ENCODE measurements at regions of chr4 and their contacts with region 1.

Region 1: GRCh38 chr4:96955226-96955625 is 1115.3 kb downstream of the PDHA2 start:
- DNase-seq: no peak
- H3K4me3 ChIP-seq: no peak overlapping the region
- H3K27ac ChIP-seq: no peak overlapping the region
- H3K4me1 ChIP-seq: no peaks in the 10 kb centered on the region
- H3K27me3 ChIP-seq: no peaks in the 10 kb centered on the region
- CTCF ChIP-seq: no peak
- POLR2A ChIP-seq: no peak

Region 2: DNA sequence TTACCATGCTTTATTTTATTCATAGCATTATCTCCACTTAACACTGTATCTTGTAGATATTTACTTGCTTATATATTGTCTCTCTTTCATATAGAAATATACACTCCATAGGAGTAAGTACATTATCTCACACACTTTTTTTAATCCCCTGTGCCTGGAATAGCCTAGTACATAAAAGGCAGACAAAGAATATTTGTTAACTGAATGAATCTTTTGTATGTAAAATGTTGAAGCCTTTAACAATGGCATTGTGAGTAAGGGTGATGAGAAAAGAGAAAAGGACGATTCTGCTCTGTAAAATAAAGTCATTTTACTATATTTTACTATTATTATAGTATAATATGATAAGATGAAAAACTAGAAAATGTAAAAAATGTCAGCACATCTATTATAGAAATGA is 1213.0 kb before region 1 on chr4:
- intact Hi-C with region 1: no loop called
- DNase-seq: no peak
- H3K4me3 ChIP-seq: no peak overlapping the region
- H3K27ac ChIP-seq: no peak overlapping the region
- H3K4me1 ChIP-seq: no peaks in the 10 kb centered on the region
- H3K27me3 ChIP-seq: no peaks in the 10 kb centered on the region
- CTCF ChIP-seq: no peak
- POLR2A ChIP-seq: no peak

Region 3: GRCh38 chr4:96856492-96856891 is 98.7 kb before region 1 on chr4:
- intact Hi-C with region 1: loop called (anchors 5 kb)
- DNase-seq: no peak
- H3K4me3 ChIP-seq: no peak overlapping the region
- H3K27ac ChIP-seq: no peak overlapping the region
- H3K4me1 ChIP-seq: no peaks in the 10 kb centered on the region
- H3K27me3 ChIP-seq: no peaks in the 10 kb centered on the region
- CTCF ChIP-seq: no peak
- POLR2A ChIP-seq: no peak

Measured in breast epithelium (tissue), 4 donors.